HEK293 (cell line): ENCODE measurements at regions of chr1 and their contacts with region 1.

Region 1: DNA sequence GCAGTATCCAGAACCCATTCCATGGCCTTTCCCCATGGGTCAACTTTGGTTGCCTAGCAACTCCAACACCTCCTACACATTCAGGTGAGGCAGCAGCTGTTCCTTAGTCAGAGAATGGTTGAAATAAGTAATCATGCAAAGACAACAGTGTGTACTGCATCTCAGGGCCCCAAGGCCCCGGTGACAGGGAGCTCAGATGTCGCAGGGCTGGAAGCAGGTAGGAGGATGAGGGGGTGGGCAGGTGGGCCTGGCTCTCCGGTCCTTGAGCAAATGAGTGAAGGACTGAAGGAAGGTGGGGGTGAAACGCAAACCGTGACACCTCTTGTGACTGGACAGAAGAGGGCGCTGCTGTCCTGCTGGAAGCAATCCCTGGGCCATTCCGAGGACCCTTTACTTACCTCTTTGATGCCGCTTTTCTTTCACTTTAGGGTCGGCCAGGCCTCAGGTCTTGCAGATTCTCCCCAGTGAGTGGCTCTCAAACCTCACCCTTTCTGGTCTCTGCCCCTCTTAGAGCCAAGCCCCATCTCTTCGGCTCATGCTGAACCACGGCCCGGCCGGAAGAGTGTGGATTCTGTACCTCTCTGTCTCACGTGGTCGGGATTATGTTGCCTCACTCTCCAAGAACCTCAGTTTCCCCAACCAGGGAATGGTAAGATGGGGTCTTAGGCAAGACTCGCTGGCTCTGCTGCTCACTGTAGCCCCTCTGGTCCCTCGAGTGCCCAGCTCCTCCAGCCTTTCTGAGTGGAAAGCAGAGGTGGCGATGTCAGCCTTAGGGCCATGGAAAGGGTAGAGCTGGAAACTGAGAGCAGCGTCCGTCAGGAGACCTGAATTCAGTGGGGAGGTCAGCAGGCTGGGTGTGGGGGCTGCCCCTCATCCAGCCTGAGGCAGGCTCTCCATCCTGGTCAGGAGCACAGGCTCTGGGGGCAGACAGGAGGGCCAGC is 5.6 kb upstream of the KCNA10 start:
- H3K4me3 ChIP-seq: no peak overlapping the region
- H3K27ac ChIP-seq: no peak overlapping the region
- H3K4me1 ChIP-seq: no peaks in the 10 kb centered on the region
- CTCF ChIP-seq: peak; percentile 76

Region 2: GRCh38 chr1:110542725-110543124 is 18.1 kb after region 1 on chr1:
- CTCF ChIA-PET with region 1: interaction called, 47 read pairs
- POLR2A ChIA-PET with region 1: no interaction called
- H3K4me3 ChIP-seq: no peak overlapping the region
- H3K27ac ChIP-seq: no peak overlapping the region
- H3K4me1 ChIP-seq: no peaks in the 10 kb centered on the region
- CTCF ChIP-seq: no peak

Region 3: DNA sequence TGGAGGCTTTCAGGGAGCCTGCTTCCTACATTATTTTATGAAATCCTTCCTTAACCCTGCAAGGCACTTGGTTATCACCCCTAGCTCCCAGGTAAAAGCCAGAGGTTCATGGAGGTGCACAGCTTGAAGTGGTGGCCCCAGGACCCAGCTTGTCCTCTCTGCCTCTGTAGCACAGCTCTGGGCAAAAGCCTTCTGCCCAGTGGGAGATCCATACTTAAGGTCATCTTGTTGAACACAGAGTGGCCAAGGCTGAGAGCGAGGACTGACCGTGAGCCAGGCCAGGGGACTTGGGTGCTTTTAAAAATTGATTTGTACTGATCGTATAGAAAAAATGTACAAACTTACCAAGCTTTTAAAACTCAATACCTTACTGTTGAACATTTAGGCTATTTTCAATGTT is 48.2 kb after region 1 on chr1:
- CTCF ChIA-PET with region 1: interaction called, 14 read pairs
- POLR2A ChIA-PET with region 1: no interaction called
- H3K4me3 ChIP-seq: no peak overlapping the region
- H3K27ac ChIP-seq: no peak overlapping the region
- H3K4me1 ChIP-seq: no peaks in the 10 kb centered on the region
- CTCF ChIP-seq: no peak

Region 4: GRCh38 chr1:110605901-110606656 is 81.5 kb after region 1 on chr1 and contains the start of gene KCNA2:
- CTCF ChIA-PET with region 1: interaction called, 14 read pairs
- POLR2A ChIA-PET with region 1: no interaction called
- H3K4me3 ChIP-seq: peak within 1 kb of the TSS; percentile 43
- H3K27ac ChIP-seq: no peak within 1 kb of the TSS; the same call in 1 of the 2 replicates
- H3K4me1 ChIP-seq: no peaks in the 10 kb centered on the region
- CTCF ChIP-seq: peak; percentile 57

Region 5: DNA sequence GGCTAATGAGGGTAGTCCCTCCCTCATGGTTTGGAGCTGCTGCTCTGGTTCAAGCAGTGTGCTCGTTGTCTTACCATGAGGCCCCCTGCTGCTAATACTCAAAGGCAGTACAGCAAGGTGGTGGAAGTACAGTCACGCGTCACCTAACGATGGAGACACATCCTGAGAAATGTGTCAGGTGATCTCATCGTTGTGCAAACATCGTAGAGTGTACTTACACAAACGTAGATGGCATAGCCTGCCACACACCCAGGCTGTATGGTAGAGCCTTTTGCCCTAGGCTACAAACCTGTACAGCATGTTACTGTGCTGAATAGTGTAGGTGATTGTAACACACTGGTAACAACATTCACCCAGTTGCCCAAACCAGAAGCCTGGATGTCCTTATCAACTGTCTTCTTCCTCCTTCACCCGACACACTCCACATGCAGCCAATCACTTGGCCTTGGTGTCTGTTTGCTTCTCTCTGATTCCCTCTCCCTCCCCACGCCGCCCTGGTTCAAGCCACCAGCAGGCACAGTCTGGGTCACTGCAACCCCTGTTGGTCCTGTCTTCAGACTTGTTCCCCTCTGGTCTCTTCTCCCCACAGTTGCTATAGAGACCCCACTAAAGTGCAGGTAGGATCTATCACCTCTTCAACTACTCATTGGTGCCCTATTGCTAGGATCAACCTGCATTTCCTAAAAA is 87.6 kb after region 1 on chr1:
- CTCF ChIA-PET with region 1: interaction called, 113 read pairs
- POLR2A ChIA-PET with region 1: no interaction called
- H3K4me3 ChIP-seq: no peak overlapping the region
- H3K27ac ChIP-seq: no peak overlapping the region
- H3K4me1 ChIP-seq: no peaks in the 10 kb centered on the region
- CTCF ChIP-seq: no peak

Region 6: DNA sequence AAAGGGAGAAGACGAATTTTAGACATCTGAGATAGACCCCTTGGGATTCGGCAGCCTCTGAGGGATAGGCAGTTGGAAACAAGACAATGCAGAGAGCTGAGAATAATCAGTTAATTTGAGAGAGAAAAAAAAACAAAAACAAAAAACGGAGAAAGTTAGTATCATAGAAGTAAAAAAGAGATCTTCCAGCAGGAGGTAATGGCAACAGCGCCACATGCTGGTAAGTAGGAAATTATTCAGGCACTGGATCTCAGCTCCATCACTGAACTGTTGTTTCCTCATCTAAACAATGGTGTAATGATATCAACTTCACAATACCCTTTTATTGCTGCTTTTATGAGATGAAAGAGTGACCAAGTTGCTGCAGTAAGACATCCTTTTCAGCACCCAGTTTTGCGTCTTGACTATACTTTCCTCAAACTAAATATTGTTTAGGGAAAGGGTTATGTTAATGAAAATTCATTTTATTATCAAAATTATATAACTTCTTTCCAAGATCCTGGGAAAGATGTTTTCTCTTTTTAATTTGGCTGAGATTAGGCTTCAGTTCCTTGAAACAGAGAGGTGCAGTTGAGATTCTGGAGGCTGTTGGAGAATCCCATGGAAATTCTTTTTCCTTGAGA is 241.6 kb after region 1 on chr1:
- CTCF ChIA-PET with region 1: interaction called, 50 read pairs
- POLR2A ChIA-PET with region 1: no interaction called
- H3K4me3 ChIP-seq: no peak overlapping the region
- H3K27ac ChIP-seq: no peak overlapping the region
- H3K4me1 ChIP-seq: no peaks in the 10 kb centered on the region
- CTCF ChIP-seq: peak; percentile 77; the same call in 1 of the 2 replicates

Region 7: DNA sequence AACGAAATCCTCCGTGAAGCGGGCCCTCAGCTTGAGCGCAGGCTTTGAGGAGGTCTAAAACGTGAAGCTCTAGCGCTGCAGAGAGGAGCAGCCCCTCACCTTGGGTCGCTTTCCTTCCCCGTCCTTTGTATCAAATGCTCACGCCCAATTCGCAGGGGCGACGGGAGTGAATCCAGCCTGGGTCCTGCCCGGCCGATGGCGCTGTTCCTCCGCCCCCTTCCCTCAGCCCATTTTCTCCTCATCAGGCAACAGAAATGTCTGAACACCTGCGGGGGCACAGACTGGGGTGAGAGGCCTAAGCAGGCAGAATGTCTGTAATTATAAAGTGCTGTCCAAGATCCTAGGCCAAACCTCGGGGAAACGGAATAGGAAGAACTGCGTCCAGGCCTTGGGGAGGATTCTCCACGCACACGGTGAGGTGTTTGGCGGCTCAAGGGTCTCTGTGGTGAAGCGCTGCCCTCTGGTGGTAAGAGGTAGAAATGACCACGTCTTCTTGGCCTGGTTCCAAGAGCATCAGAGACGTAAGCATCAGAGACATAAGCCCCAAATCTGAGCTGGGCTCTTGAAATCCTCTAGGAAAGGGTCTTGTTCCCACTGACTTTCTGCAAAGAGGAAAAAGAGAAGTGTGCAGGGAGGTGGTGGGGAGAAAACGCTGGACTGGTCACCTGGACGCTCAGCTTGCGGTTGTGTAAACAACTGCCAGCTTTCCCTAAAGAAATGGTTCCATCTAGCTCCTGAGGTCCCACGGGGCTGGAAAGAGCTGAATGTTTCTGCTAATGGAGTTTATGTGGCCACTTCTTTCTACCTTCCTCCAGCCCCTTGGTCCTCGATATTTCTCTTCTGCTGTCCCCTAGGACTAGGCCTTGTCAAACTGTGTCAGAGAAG is 256.3 kb after region 1 on chr1:
- CTCF ChIA-PET with region 1: interaction called, 59 read pairs
- POLR2A ChIA-PET with region 1: no interaction called
- H3K4me3 ChIP-seq: no peak overlapping the region
- H3K27ac ChIP-seq: no peak overlapping the region
- H3K4me1 ChIP-seq: no peaks in the 10 kb centered on the region
- CTCF ChIP-seq: peak; percentile 64; the same call in 1 of the 2 replicates